ENCODE measurements at regions of chr7 and their contacts with region 1.

Region 1: GRCh38 chr7:100148559-100149350 is at the start of gene LAMTOR4:
- DNase-seq: peak; percentile 94 to 99 (median 99)
- H3K4me3 ChIP-seq: peak within 1 kb of the TSS; percentile 83 to 93
- H3K4me3 Mint-ChIP-seq: peak within 1 kb of the TSS; percentile 88 to 99 (median 94)
- H3K27ac ChIP-seq: peak within 1 kb of the TSS; percentile 92
- H3K27ac Mint-ChIP-seq: peak within 1 kb of the TSS; percentile 95 to 99 (median 97)
- H3K4me1 ChIP-seq: peaks cover 45% of the 10 kb centered on the region
- H3K4me1 Mint-ChIP-seq: peaks cover 18 to 45% (median 31%) of the 10 kb centered on the region in 4 donors
- H3K27me3 ChIP-seq: no peaks in the 10 kb centered on the region
- H3K27me3 Mint-ChIP-seq: no peaks in the 10 kb centered on the region
- total RNA-seq, gene LAMTOR4: 178 to 189 TPM

Region 2: DNA sequence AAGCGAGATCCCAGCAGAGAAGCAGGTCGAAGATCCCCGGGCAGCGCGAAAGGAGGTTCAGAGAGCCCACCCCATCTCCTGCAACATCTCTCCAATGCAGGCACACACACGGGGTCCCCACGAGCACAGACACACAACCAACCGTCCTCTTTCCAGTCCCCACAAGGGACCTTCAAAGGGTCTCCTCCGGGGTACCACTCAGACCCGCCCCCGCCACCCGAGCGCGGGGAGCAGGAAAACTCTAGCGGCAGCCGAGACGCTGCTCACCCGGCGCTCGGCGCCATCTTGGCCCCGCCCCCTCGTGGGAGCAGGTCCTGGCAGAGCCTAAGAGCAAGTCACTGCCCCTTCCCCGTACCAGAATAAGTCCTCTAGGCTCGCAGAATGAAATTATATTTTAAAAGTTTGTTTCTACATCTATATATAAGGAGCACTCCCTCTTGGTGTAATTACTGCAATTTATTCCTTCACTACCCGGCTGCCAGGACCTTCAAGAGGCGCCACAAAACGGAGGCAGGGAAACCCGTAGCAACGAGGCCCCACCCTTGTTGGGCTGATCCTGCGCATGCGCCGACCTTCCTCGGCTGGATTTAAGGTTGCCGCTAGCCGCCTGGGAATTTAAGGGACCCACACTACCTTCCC is 29.6 kb before region 1 on chr7 and contains the starts of genes CNPY4 and TAF6:
- CTCF ChIA-PET with region 1: no interaction called
- POLR2A ChIA-PET with region 1: interaction called, 11 read pairs
- intact Hi-C with region 1: loop called (anchors 1 kb)
- DNase-seq: peak; percentile 96
- H3K4me3 ChIP-seq: peak within 1 kb of the TSS; percentile 89 to 95
- H3K4me3 Mint-ChIP-seq: peak within 1 kb of the TSS; percentile 94 to 99 (median 96)
- H3K27ac ChIP-seq: peak within 1 kb of the TSS; percentile 80
- H3K27ac Mint-ChIP-seq: peak within 1 kb of the TSS; percentile 95 to 100 (median 99)
- H3K4me1 ChIP-seq: peaks cover 26% of the 10 kb centered on the region
- H3K4me1 Mint-ChIP-seq: peaks cover 7 to 40% (median 26%) of the 10 kb centered on the region in 4 donors
- H3K27me3 ChIP-seq: no peaks in the 10 kb centered on the region
- H3K27me3 Mint-ChIP-seq: no peaks in the 10 kb centered on the region
- total RNA-seq, gene CNPY4: 69.0 to 69.8 TPM
- total RNA-seq, gene TAF6: 61.6 to 62.2 TPM

Region 3: DNA sequence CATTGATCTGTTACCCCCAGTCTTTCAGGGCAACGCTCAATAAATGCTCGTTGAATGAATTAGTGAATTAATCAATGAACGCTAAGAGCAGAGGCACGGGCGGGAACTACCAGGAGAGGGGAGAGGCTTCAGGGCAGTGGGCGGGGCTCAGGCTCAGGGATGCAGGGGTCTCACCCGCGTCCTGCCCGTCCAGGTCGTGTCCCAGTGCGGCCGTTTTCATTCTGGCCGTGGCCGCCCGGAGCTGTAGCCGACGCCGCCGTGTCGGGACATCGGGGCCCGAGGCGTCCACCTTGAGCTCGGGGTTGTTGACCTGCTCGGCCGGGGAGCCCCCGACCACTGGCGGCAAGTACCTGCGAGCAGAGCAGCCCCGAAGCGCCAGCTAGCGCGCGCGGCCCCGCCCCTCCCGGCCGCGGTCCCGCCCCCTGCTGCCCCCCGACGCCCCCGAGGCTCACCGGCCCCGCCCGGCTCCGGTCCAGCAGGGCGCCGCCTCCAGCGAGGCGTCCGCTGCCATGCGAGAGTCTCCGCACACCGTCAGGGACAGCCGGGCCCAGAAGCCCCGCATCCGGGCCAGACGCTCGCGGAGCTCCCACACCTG is 22.4 kb after region 1 on chr7:
- CTCF ChIA-PET with region 1: interaction called, 4 read pairs
- POLR2A ChIA-PET with region 1: interaction called, 95 read pairs
- intact Hi-C with region 1: loop called (anchors 2 kb)
- DNase-seq: peak in 2 of 5 donors; percentile 32 to 52
- H3K4me3 ChIP-seq: no peak overlapping the region
- H3K4me3 Mint-ChIP-seq: peak overlapping the region; percentile 69 to 87 (median 78)
- H3K27ac ChIP-seq: no peak overlapping the region
- H3K27ac Mint-ChIP-seq: peak overlapping the region in 4 of 7 donors; percentile 7 to 85 (median 64)
- H3K4me1 ChIP-seq: peaks cover 55% of the 10 kb centered on the region
- H3K4me1 Mint-ChIP-seq: peaks cover 39 to 67% (median 50%) of the 10 kb centered on the region in 4 donors
- H3K27me3 ChIP-seq: no peaks in the 10 kb centered on the region
- H3K27me3 Mint-ChIP-seq: peaks cover 2 to 4% of the 10 kb centered on the region in 2 donors

Region 4: GRCh38 chr7:100177045-100178001 is 28.6 kb after region 1 on chr7 and contains the starts of genes GPC2 and STAG3:
- CTCF ChIA-PET with region 1: interaction called, 3 read pairs
- POLR2A ChIA-PET with region 1: interaction called, 30 read pairs
- intact Hi-C with region 1: loop called (anchors 1 kb)
- DNase-seq: peak; percentile 96 to 97 (median 97)
- H3K4me3 ChIP-seq: peak within 1 kb of the TSS; percentile 36 to 41
- H3K4me3 Mint-ChIP-seq: peak within 1 kb of the TSS; percentile 66 to 83 (median 80)
- H3K27ac ChIP-seq: peak within 1 kb of the TSS; percentile 35
- H3K27ac Mint-ChIP-seq: peak within 1 kb of the TSS; percentile 62 to 91 (median 76)
- H3K4me1 ChIP-seq: peaks cover 30% of the 10 kb centered on the region
- H3K4me1 Mint-ChIP-seq: peaks cover 22 to 50% (median 34%) of the 10 kb centered on the region in 4 donors
- H3K27me3 ChIP-seq: no peaks in the 10 kb centered on the region
- H3K27me3 Mint-ChIP-seq: no peaks in the 10 kb centered on the region
- total RNA-seq, gene GPC2: 11.8 to 12.5 TPM
- total RNA-seq, gene STAG3: 6.5 to 7.7 TPM

Measured in CD4-positive, alpha-beta memory T cell (primary cell).